Posterior vena cava (tissue), 2 donors: ENCODE measurements at regions of chr14 and their contacts with region 1.

Region 1: GRCh38 chr14:90579088-90579487 is 182.3 kb downstream of the CALM1 start:
- DNase-seq: peak; percentile 66

Region 2: GRCh38 chr14:90518941-90519256 is 60.2 kb before region 1 on chr14:
- intact Hi-C with region 1: loop called in 1 of 2 experiments (anchors 1 kb)
- DNase-seq: peak; percentile 79

Region 3: DNA sequence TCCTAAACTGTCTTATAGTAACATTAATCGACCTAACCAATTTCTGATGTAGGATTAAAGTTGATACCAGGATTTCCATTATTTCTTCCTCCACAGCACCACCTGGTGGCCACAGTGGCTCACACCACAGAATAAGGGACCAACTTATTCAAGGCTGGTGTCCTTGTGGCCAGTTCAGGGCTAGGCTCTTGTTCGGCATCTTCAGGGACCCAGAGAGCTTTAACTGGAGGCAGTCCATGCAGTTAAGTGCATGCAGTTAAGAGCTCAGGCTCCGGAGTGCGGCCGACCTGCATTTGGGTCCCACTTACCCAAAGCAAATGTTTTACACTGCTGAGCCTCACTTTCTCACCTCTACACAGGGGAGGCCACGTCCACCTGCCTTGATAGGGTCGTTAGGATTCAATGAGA is 707.4 kb after region 1 on chr14:
- intact Hi-C with region 1: no loop called
- DNase-seq: peak; percentile 92